ENCODE measurements at regions of chr17 and their contacts with region 1.

Region 1: DNA sequence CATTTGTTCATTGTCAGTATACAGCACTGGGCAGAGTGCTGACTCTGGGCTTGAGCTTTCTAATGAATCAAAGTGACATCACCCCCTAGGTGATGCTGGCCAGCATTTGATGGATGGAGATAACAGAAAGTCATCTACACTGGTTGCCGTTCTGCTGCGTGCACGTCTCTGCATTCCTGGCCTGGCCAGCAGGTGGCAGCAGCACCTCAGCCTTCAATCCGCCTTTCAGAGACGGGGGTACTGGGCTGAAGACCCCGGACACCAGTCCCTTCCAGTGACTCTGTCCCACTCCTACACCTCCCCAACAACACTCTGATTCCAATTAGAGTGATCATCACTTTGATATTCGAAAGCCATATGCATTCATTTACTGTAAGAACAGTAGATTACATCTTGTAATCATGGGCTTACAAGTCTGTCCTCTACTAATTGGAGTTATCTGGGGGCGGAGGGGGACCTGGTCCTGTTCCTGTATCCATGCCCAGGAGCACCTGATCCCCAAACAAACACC is 6.0 kb downstream of the CPSF4L start:
- DNase-seq: peak; percentile 58
- H3K4me3 ChIP-seq: no peak overlapping the region
- H3K27ac ChIP-seq: no peak overlapping the region
- H3K4me1 ChIP-seq: peaks cover 3% of the 10 kb centered on the region
- H3K27me3 ChIP-seq: no peaks in the 10 kb centered on the region
- CTCF ChIP-seq: peak; percentile 95
- POLR2A ChIP-seq: no peak

Region 2: DNA sequence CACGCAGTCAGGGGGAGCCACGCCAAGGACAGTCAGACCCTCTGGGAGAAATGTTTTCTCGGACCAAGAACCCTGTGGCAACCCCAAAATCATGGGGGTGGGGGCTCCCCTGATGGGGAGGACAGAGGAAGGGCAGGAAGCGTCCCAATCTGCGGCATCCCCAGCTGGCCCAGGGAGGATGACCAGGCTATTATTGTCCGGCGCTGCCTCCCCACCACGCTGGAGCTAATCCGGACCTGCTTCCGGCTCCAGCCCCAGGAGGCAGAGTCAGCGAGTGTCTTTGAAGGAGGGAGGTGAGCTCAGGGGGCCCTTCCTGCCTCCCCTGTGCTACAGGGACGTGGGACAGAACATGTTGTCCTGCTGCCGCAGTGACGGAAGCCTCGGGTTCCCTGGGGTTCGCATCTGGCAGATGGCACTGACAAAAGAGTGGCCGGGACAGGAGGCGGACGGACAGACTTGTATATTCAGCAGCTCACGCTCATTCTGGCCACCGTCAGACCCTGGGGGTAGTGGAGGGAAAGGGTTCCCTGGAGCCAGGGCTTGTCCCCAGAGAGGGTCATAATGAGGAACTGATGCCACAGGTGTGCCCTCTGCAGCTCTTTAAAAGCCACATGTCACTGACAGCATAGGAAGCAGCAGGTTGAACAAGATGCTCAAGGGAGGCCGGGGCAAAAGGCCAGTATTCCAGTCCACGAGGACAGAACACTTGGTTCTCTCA is 110.3 kb after region 1 on chr17:
- intact Hi-C with region 1: loop called (anchors 5 kb)
- DNase-seq: peak; percentile 50
- H3K4me3 ChIP-seq: no peak overlapping the region
- H3K27ac ChIP-seq: peak overlapping the region; percentile 31 to 86
- H3K4me1 ChIP-seq: peaks cover 32% of the 10 kb centered on the region
- H3K27me3 ChIP-seq: no peaks in the 10 kb centered on the region
- CTCF ChIP-seq: no peak
- POLR2A ChIP-seq: no peak

Measured in testis (tissue), 5 donors.